HepG2 (cell line): ENCODE measurements at regions of chr10 and their contacts with region 1.

Region 1: GRCh38 chr10:22228943-22229801 is 11.4 kb upstream of the EBLN1 start:
- DNase-seq: peak; percentile 80
- ATAC-seq: peak; percentile 97
- H3K4me3 ChIP-seq: peak overlapping the region; percentile 81 to 91 (median 81)
- H3K27ac ChIP-seq: peak overlapping the region; percentile 82
- H3K4me1 ChIP-seq: peaks cover 5% of the 10 kb centered on the region; the same call in 1 of the 2 replicates
- H3K27me3 ChIP-seq: peaks cover 0 to 14% of the 10 kb centered on the region in 2 experiments; a peak in 2 of 5 replicates
- CTCF ChIP-seq: no peak
- EP300 ChIP-seq: no peak
- POLR2A ChIP-seq: no peak
- RAD21 ChIP-seq: no peak

Region 2: GRCh38 chr10:22534849-22535604 is 305.9 kb after region 1 on chr10:
- CTCF ChIA-PET with region 1: no interaction called
- POLR2A ChIA-PET with region 1: no interaction called
- in situ Hi-C with region 1: no loop called
- intact Hi-C with region 1: loop called (anchors 10 kb)
- DNase-seq: peak; percentile 76
- ATAC-seq: peak; percentile 86
- H3K4me3 ChIP-seq: no peak overlapping the region
- H3K27ac ChIP-seq: no peak overlapping the region
- H3K4me1 ChIP-seq: peaks cover 14% of the 10 kb centered on the region
- H3K27me3 ChIP-seq: no peaks in the 10 kb centered on the region; a peak in 1 of 5 replicates
- CTCF ChIP-seq: no peak
- EP300 ChIP-seq: 0 out of 4 replicates have a peak, but pooled peaks of 1 of the 2 experiments have one; percentile 18
- POLR2A ChIP-seq: no peak
- RAD21 ChIP-seq: no peak